A673 (cell line): ENCODE measurements at regions of chr2 and their contacts with region 1.

Region 1: GRCh38 chr2:123644053-123644452 is 381.0 kb upstream of the CNTNAP5 start:
- DNase-seq: no peak
- H3K4me3 ChIP-seq: no peak overlapping the region
- H3K27ac ChIP-seq: no peak overlapping the region
- H3K4me1 ChIP-seq: no peaks in the 10 kb centered on the region
- H3K27me3 ChIP-seq: no peaks in the 10 kb centered on the region
- CTCF ChIP-seq: no peak

Region 2: DNA sequence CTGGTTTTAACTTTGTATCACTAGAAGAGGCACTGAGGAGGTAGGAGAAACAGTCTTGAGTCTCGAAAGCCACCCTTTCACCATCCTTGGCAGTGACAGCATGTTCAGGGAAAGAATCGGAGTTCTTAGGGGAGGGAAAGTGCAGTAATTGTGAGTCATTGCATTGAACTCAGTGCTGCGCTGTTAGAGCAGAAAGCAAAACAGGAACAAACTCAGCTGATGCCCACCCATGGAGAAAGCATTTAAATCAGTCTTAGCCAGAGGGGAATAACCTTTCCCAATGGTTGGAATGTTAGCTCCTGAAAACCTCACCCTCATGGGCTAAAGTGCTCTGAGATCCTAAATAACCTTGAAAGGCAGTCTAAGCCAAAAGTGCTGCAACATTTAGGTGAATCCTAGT is 464.5 kb before region 1 on chr2:
- CTCF ChIA-PET with region 1: no interaction called
- POLR2A ChIA-PET with region 1: no interaction called
- intact Hi-C with region 1: loop called (anchors 5 kb)
- DNase-seq: no peak
- H3K4me3 ChIP-seq: no peak overlapping the region
- H3K27ac ChIP-seq: no peak overlapping the region
- H3K4me1 ChIP-seq: no peaks in the 10 kb centered on the region
- H3K27me3 ChIP-seq: no peaks in the 10 kb centered on the region
- CTCF ChIP-seq: no peak